GM10248 (cell line): ENCODE measurements at regions of chr9 and their contacts with region 1.

Region 1: GRCh38 chr9:128438343-128439109 is 17.3 kb upstream of the ODF2 start:
- DNase-seq: peak; percentile 90
- CTCF ChIP-seq: peak; percentile 96

Region 2: GRCh38 chr9:128420060-128420650 is 18.4 kb before region 1 on chr9:
- CTCF ChIA-PET with region 1: interaction called, 38 read pairs
- POLR2A ChIA-PET with region 1: no interaction called
- DNase-seq: peak; percentile 93
- CTCF ChIP-seq: peak; percentile 82

Region 3: GRCh38 chr9:128448746-128449145 is 10.2 kb after region 1 on chr9:
- CTCF ChIA-PET with region 1: interaction called, 22 read pairs
- POLR2A ChIA-PET with region 1: no interaction called
- DNase-seq: no peak
- CTCF ChIP-seq: no peak

Region 4: GRCh38 chr9:128455849-128456612 is 17.5 kb after region 1 on chr9 and contains the start of gene ODF2:
- CTCF ChIA-PET with region 1: interaction called, 13 read pairs
- POLR2A ChIA-PET with region 1: no interaction called
- DNase-seq: peak; percentile 100
- CTCF ChIP-seq: no peak